Activated CD8-positive, alpha-beta T cell treated with anti-CD3 and anti-CD28 coated beads for 36 hours (primary cell): ENCODE measurements at regions of chr1 and their contacts with region 1.

Region 1: GRCh38 chr1:204446370-204447111 is 34.9 kb upstream of the PPP1R15B start:
- DNase-seq: peak; percentile 87
- ATAC-seq: peak; percentile 91
- H3K4me3 Mint-ChIP-seq: no peak overlapping the region
- H3K27ac Mint-ChIP-seq: peak overlapping the region; percentile 69
- H3K4me1 Mint-ChIP-seq: peaks cover 16% of the 10 kb centered on the region
- H3K27me3 Mint-ChIP-seq: no peaks in the 10 kb centered on the region
- CTCF ChIP-seq: peak; percentile 66

Region 2: GRCh38 chr1:204411451-204412204 is 34.9 kb before region 1 on chr1 and contains the start of gene PPP1R15B:
- CTCF ChIA-PET with region 1: interaction called, 17 read pairs
- POLR2A ChIA-PET with region 1: no interaction called
- intact Hi-C with region 1: no loop called
- DNase-seq: peak; percentile 97
- ATAC-seq: peak; percentile 92
- H3K4me3 Mint-ChIP-seq: peak within 1 kb of the TSS; percentile 99
- H3K27ac Mint-ChIP-seq: peak within 1 kb of the TSS; percentile 100
- H3K4me1 Mint-ChIP-seq: peaks cover 19% of the 10 kb centered on the region
- H3K27me3 Mint-ChIP-seq: no peaks in the 10 kb centered on the region
- CTCF ChIP-seq: no peak
- total RNA-seq, gene PPP1R15B: 63.8 to 64.6 TPM

Region 3: DNA sequence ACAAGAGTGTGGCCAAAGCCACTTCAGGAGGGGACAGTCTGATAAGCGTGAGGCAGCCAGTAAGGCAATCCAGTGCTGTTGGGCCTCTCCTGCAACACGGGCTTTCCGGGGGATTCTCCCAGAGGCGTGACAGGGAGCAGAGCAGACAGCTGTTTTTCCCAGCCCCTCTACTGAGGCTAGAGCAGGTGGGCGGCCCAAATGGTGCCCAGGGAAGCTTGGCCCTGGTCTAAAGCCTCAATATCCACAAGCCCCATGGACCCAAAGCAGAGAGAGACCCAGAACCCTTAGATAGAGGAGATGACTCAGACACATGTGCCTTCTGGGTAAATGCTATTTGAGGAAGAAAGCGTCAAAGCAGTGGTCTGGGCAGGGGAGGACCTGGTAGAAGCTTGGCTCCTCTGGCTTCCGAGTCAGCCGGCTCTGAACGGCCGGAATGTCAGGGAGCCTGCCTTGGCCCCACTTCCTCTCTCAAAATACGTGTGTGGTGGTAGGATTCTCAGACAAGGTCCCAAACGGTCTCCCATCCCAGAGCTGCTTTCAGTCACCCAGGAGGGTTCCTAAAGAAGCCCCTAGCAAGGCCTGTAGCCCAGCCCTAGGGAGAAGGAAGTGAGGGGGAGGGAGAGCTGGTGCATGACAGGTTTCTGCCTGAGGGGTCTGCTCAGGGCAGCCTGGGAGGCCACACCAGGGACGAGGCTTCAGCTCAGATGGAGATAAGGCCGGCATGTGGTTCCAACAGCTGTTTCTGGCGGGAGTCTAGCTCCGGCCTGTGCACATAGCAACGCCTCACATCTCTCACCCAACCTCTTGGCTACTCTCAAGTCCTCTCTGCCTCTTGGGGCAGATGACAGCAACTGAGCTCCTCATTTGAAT is 19.2 kb after region 1 on chr1:
- CTCF ChIA-PET with region 1: interaction called, 13 read pairs
- POLR2A ChIA-PET with region 1: interaction called, 3 read pairs
- intact Hi-C with region 1: no loop called
- DNase-seq: no peak
- ATAC-seq: no peak
- H3K4me3 Mint-ChIP-seq: no peak overlapping the region
- H3K27ac Mint-ChIP-seq: peak overlapping the region; percentile 39
- H3K4me1 Mint-ChIP-seq: peaks cover 53% of the 10 kb centered on the region
- H3K27me3 Mint-ChIP-seq: no peaks in the 10 kb centered on the region
- CTCF ChIP-seq: no peak

Region 4: DNA sequence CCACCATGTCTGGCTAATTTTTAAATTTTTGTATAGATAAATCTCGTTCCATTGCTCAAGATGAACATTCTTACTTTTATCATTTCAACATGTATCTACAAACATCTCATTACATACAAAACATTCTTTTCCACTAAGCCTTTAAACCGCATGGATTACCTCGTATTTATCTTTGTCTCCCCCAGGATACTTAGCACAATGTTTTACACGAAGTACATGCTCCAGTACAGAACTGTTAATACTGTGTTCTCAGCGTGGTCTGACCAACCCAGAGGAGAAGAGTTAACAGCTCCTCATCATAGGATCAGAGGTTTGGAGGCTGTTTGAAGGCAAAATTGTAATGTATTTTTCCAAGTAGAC is 40.7 kb after region 1 on chr1:
- CTCF ChIA-PET with region 1: interaction called, 1,122 read pairs
- POLR2A ChIA-PET with region 1: interaction called, 3 read pairs
- intact Hi-C with region 1: no loop called
- DNase-seq: no peak
- ATAC-seq: no peak
- H3K4me3 Mint-ChIP-seq: no peak overlapping the region
- H3K27ac Mint-ChIP-seq: no peak overlapping the region
- H3K4me1 Mint-ChIP-seq: peaks cover 31% of the 10 kb centered on the region
- H3K27me3 Mint-ChIP-seq: no peaks in the 10 kb centered on the region
- CTCF ChIP-seq: no peak

Region 5: GRCh38 chr1:204506961-204507387 is 60.4 kb after region 1 on chr1:
- CTCF ChIA-PET with region 1: interaction called, 1,122 read pairs
- POLR2A ChIA-PET with region 1: interaction called, 11 read pairs
- intact Hi-C with region 1: loop called (anchors 1 kb)
- DNase-seq: peak; percentile 93
- ATAC-seq: peak; percentile 75
- H3K4me3 Mint-ChIP-seq: peak overlapping the region; percentile 89
- H3K27ac Mint-ChIP-seq: peak overlapping the region; percentile 99
- H3K4me1 Mint-ChIP-seq: peaks cover 26% of the 10 kb centered on the region
- H3K27me3 Mint-ChIP-seq: peaks cover 3% of the 10 kb centered on the region
- CTCF ChIP-seq: no peak